Activated CD4-positive, alpha-beta T cell treated with anti-CD3 and anti-CD28 coated beads, Interleukin-2, amount 10 ng/mL, durations not matched to agents 24 days and 14 days (primary cell): ENCODE measurements at regions of chr15 and their contacts with region 1.

Region 1: DNA sequence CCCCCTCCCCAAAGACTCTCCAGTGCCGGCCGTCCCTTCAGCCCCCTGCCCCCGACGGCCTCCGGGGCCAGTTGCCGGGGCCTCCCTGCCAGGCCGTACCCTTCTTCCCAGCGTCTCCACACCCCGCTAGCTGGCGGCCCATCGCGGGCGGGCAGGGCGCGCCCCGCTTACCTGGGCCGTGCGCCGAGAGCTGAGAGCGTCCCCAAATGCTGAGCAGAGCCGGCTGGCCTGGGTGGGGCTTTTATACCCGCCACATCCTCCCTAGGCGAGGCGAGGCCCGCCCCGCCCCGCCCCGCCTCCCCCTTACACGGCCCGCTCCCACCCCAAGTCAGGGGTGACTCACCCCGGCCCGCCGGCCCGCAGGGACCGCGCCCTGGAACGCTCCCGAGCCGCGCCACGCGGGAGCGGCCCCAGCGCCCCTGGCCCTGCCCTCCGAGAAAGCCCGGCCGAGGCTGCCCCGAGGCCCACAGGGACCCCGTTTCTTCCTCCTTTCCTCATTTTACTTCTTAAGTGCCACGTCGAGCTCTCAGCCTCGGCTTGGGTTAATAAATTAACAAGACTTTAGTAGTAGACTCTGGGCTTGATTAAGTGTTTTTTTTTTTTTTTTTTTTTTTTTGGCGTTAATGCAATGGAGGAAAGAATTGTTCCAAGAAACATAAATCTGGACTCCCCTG is at the start of gene ANXA2:
- DNase-seq: peak; percentile 94
- H3K4me3 Mint-ChIP-seq: peak within 1 kb of the TSS; percentile 92
- H3K27ac Mint-ChIP-seq: peak within 1 kb of the TSS; percentile 94
- H3K4me1 Mint-ChIP-seq: peaks cover 51% of the 10 kb centered on the region
- H3K27me3 Mint-ChIP-seq: peaks cover 4% of the 10 kb centered on the region
- total RNA-seq, gene ANXA2: 214 and 225 TPM in 2 replicates

Region 2: GRCh38 chr15:59688841-59689625 is 708.9 kb before region 1 on chr15 and contains the start of gene BNIP2:
- intact Hi-C with region 1: loop called (anchors 2 kb)
- DNase-seq: peak; percentile 100
- H3K4me3 Mint-ChIP-seq: peak within 1 kb of the TSS; percentile 95
- H3K27ac Mint-ChIP-seq: peak within 1 kb of the TSS; percentile 98
- H3K4me1 Mint-ChIP-seq: peaks cover 40% of the 10 kb centered on the region
- H3K27me3 Mint-ChIP-seq: no peaks in the 10 kb centered on the region
- total RNA-seq, gene BNIP2: 55.1 and 57.2 TPM in 2 replicates

Region 3: DNA sequence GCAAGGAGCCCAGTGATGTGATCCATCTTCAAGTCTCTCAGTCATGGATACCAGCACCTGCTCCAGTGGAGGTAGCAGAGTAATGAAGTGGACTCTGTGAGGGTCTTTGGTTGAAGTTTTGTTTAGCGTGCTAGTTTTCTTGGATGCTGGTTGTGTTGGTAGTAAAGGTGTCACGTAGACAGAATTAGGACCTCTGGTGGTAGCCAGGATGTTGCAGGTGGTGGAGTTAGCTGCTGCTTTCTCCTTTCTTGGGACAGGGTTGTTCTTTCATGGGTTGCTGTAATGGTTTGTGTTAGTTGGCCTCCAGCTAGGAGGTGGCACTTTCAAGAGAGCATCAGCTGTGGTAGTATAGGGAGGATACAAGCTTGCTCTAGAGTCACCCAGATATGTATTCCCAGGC is 125.3 kb before region 1 on chr15:
- intact Hi-C with region 1: no loop called
- DNase-seq: no peak
- H3K4me3 Mint-ChIP-seq: no peak overlapping the region
- H3K27ac Mint-ChIP-seq: no peak overlapping the region
- H3K4me1 Mint-ChIP-seq: no peaks in the 10 kb centered on the region
- H3K27me3 Mint-ChIP-seq: peaks cover 33% of the 10 kb centered on the region

Region 4: DNA sequence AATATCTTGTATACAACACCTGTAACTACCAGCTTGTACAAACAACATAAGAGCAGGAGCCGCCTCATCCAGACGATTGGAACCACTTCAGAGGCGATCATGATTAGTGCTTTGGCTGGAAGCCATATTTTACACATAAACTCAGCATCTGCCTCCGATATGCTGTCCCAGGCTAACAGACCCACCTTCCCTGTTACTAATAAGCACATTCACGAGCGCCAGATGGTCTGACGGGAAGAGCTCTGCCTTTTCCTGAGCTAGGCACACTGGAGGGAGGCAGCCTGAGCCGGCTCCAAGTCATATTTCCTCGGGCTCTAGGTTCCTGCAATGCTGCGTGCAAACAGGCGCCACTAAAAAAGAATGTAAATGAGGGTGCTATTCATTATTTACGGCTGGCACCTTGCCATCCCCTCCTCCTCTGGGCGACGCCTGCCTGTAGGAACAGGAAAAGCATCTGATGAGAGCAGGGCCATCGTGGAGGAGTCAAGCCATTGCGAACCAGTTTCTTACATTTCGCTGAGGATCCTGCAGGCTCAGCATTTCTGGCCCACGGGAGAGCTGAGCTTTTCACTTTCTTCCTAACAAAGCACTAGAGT is 98.4 kb before region 1 on chr15:
- intact Hi-C with region 1: no loop called
- DNase-seq: no peak
- H3K4me3 Mint-ChIP-seq: no peak overlapping the region
- H3K27ac Mint-ChIP-seq: no peak overlapping the region
- H3K4me1 Mint-ChIP-seq: no peaks in the 10 kb centered on the region
- H3K27me3 Mint-ChIP-seq: peaks cover 4% of the 10 kb centered on the region

Region 5: GRCh38 chr15:60444289-60444912 is 46.5 kb after region 1 on chr15:
- intact Hi-C with region 1: loop called (anchors 5 kb)
- DNase-seq: no peak
- H3K4me3 Mint-ChIP-seq: no peak overlapping the region
- H3K27ac Mint-ChIP-seq: no peak overlapping the region
- H3K4me1 Mint-ChIP-seq: peaks cover 6% of the 10 kb centered on the region
- H3K27me3 Mint-ChIP-seq: no peaks in the 10 kb centered on the region

Region 6: GRCh38 chr15:60462027-60462426 is 64.1 kb after region 1 on chr15:
- intact Hi-C with region 1: no loop called
- DNase-seq: no peak
- H3K4me3 Mint-ChIP-seq: no peak overlapping the region
- H3K27ac Mint-ChIP-seq: peak overlapping the region; percentile 24
- H3K4me1 Mint-ChIP-seq: peaks cover 5% of the 10 kb centered on the region
- H3K27me3 Mint-ChIP-seq: no peaks in the 10 kb centered on the region

Region 7: GRCh38 chr15:60478566-60479360 is 80.9 kb after region 1 on chr15 and contains the start of gene ICE2:
- intact Hi-C with region 1: loop called (anchors 1 kb)
- DNase-seq: peak; percentile 99
- H3K4me3 Mint-ChIP-seq: peak within 1 kb of the TSS; percentile 95
- H3K27ac Mint-ChIP-seq: peak within 1 kb of the TSS; percentile 99
- H3K4me1 Mint-ChIP-seq: peaks cover 37% of the 10 kb centered on the region
- H3K27me3 Mint-ChIP-seq: no peaks in the 10 kb centered on the region
- total RNA-seq, gene ICE2: 55.4 and 62.6 TPM in 2 replicates

Region 8: DNA sequence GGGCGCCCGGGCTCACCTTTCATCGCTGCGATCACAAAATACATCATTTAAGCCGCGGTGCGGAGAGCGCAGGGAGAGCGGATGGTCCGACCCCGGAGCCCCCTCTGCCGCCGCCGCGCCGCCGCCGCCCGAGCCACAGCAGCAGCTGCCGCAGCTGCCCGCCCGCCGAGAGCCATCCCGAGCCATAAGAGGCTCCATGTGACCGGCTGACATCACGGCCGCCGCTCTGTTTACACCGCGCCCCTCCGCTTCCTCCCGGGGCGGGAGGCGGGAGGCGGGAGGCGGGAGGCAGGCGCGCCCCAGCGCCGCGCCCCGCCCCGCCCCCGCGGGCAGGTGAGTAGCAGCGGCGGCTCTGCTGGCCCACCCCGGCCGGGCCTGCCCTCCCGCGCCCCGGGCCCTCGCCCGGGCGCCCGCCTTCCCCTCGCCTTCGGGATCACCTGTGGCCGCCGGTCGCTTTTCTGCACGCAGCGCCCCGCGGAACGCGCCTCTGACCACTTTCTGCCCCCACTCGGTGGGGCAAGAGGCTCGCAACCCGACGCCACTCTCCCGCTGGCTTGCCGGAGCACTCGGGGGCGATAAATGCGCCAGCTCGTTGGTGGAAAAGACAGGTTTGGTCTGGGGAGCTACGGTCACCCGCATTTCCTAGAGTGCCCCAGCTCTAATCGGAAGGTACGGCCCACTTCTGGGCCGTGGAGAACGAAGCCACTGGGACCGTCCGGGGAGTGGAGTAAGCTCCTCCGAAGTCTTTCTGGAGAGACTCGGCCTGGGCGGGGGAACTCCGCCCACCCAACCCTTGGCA is 194.7 kb after region 1 on chr15:
- intact Hi-C with region 1: loop called (anchors 1 kb)
- DNase-seq: peak; percentile 96
- H3K4me3 Mint-ChIP-seq: peak overlapping the region; percentile 87
- H3K27ac Mint-ChIP-seq: peak overlapping the region; percentile 80
- H3K4me1 Mint-ChIP-seq: peaks cover 51% of the 10 kb centered on the region
- H3K27me3 Mint-ChIP-seq: peaks cover 2% of the 10 kb centered on the region